Dendritic cell treated with granulocyte-macrophage colony-stimulating factor and Interleukin-4, amounts not matched to agents 40 ng/mL and 50 ng/mL, for 4 days (primary cell): ENCODE measurements at regions of chr22 and their contacts with region 1.

Region 1: GRCh38 chr22:38143036-38143697 is 32.7 kb upstream of the BAIAP2L2 start:
- H3K4me3 Mint-ChIP-seq: no peak overlapping the region
- H3K27ac Mint-ChIP-seq: no peak overlapping the region
- H3K4me1 Mint-ChIP-seq: peaks cover 10% of the 10 kb centered on the region
- H3K27me3 Mint-ChIP-seq: peaks cover 69% of the 10 kb centered on the region

Region 2: DNA sequence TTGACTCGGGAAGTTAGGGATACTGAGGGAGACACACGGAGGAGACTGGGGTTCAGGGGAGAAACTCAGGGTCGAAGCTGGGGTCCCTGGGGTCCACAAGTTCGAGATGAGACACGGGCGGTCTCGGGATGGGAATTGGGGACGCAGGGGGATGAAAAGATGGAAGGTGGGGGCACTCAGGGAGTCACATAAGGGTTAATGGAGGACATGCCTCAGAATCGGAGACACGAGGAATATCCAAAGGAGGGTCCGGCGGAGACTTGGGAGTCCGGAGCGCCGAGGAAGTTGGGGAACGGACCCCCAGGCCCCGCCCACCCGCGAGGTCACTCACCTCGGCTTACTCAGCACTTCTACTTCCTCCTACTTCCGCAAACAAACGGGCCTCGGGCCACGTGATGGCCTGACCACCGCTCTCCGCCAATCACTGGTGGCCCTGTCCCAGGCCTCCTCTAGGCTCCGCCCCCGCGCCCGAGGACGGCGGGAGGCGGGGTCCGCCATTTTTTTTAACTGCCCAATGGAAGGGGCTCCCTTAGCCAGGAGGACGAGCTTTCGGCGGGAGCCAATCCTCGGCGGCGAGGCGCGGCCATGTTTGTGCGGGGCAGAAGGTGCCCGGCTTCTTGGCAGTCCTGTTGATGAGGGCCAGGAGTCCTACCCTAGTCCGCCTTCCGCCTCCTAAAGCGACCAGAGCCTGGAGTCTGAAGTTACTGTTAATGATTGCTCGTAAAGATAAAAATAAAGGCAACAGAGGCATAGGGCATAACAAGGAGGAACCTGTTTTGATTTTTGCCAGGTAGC is 38.5 kb after region 1 on chr22 and contains the start of gene PLA2G6:
- intact Hi-C with region 1: loop called (anchors 1 kb)
- H3K4me3 Mint-ChIP-seq: peak within 1 kb of the TSS; percentile 84
- H3K27ac Mint-ChIP-seq: peak within 1 kb of the TSS; percentile 99
- H3K4me1 Mint-ChIP-seq: peaks cover 43% of the 10 kb centered on the region
- H3K27me3 Mint-ChIP-seq: peaks cover 5% of the 10 kb centered on the region

Region 3: DNA sequence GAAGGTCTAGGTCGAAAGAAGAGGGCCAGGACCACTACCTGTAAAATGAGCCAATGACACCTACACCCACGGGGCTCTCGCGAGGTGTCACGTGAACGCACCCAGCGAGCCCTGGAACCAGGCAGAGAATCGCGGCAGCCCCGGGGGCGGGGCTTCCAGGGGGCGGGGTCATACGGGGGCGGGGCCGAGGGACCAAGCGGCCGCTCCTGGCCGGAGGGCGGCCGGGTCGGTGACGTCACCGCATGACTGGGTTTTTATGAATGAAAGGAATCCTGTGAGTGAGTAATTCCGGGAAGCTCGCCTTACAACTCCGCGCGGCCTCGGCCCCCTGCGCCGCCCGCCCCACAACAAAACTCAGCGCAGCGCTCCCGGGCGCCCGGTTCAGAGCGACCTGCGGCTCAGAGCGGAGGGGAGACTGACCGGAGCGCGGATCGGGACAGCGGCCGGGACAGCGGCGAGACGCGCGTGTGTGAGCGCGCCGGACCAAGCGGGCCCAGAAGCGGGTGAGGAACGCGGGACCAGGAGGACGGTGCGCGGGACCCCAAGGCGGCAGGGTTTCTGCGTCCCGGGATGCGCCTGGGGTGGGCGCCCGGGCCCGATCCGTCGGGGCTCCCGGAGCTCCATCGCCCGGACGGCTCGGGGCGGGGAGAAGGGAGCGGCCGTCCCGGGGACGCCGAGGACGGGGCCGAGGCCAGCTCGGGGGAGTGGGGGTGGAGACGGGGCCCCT is 58.7 kb after region 1 on chr22 and contains the start of gene MAFF:
- intact Hi-C with region 1: loop called (anchors 10 kb)
- H3K4me3 Mint-ChIP-seq: peak within 1 kb of the TSS; percentile 77
- H3K27ac Mint-ChIP-seq: peak within 1 kb of the TSS; percentile 40
- H3K4me1 Mint-ChIP-seq: peaks cover 67% of the 10 kb centered on the region
- H3K27me3 Mint-ChIP-seq: peaks cover 11% of the 10 kb centered on the region

Region 4: GRCh38 chr22:38240734-38241252 is 97.6 kb after region 1 on chr22:
- intact Hi-C with region 1: no loop called
- H3K4me3 Mint-ChIP-seq: no peak overlapping the region
- H3K27ac Mint-ChIP-seq: no peak overlapping the region
- H3K4me1 Mint-ChIP-seq: peaks cover 5% of the 10 kb centered on the region
- H3K27me3 Mint-ChIP-seq: no peaks in the 10 kb centered on the region